Activated CD8-positive, alpha-beta T cell treated with anti-CD3 and anti-CD28 coated beads for 36 hours (primary cell): ENCODE measurements at regions of chr2 and their contacts with region 1.

Region 1: DNA sequence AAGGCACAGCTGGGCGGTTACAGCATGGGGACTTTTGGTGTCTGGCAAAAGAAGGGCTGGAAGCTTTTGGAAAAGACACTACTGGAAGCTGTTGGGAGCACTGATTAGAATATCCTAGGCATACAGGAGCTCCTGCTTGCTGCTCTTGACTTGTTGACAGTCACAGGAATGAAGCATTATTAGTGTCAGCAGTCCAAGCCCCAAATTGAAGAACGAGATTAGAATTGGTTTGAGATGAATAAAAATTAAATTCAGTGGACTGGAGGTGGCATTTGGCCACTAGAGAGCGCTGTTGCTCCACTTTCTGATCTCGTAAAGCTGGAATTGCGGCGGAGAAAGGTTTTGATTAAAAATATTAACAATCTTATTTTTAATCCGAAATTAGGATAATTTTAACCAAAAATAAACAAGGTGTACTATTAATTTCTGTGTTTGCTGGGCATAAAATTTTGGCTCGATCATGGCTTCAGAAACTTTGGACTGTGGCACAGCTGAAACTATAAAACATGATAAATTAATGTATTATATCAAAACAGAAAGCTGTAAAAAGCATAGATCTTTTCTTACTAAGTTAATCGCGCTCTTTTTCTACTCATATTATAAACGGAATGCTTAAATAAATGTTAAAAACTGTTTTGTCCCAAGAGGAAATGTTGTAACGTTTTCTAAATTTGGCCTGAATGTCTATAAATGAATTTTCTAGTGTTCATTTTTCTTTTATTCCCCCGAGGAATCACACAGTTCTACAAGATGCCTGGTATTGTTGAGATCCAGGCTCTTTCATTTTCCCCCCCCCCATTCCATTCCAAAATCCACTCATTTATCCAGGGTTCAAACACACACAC is 2.4 kb upstream of the HOXD8 start:
- DNase-seq: peak; percentile 81
- ATAC-seq: no peak
- H3K4me3 Mint-ChIP-seq: no peak overlapping the region
- H3K27ac Mint-ChIP-seq: no peak overlapping the region
- H3K4me1 Mint-ChIP-seq: peaks cover 26% of the 10 kb centered on the region
- H3K27me3 Mint-ChIP-seq: peaks cover 71% of the 10 kb centered on the region
- CTCF ChIP-seq: peak; percentile 90

Region 2: GRCh38 chr2:176104325-176105077 is 22.6 kb before region 1 on chr2:
- CTCF ChIA-PET with region 1: interaction called, 15 read pairs
- POLR2A ChIA-PET with region 1: no interaction called
- intact Hi-C with region 1: no loop called
- DNase-seq: peak; percentile 44
- ATAC-seq: no peak
- H3K4me3 Mint-ChIP-seq: no peak overlapping the region
- H3K27ac Mint-ChIP-seq: no peak overlapping the region
- H3K4me1 Mint-ChIP-seq: peaks cover 23% of the 10 kb centered on the region
- H3K27me3 Mint-ChIP-seq: peaks cover 82% of the 10 kb centered on the region
- CTCF ChIP-seq: no peak

Region 3: GRCh38 chr2:176140513-176141317 is 13.6 kb after region 1 on chr2:
- CTCF ChIA-PET with region 1: interaction called, 38 read pairs
- POLR2A ChIA-PET with region 1: no interaction called
- intact Hi-C with region 1: no loop called
- DNase-seq: peak; percentile 76
- ATAC-seq: peak; percentile 94
- H3K4me3 Mint-ChIP-seq: peak overlapping the region; percentile 56
- H3K27ac Mint-ChIP-seq: no peak overlapping the region
- H3K4me1 Mint-ChIP-seq: peaks cover 23% of the 10 kb centered on the region
- H3K27me3 Mint-ChIP-seq: peaks cover 68% of the 10 kb centered on the region
- CTCF ChIP-seq: peak; percentile 94

Region 4: GRCh38 chr2:176445956-176446355 is 318.8 kb after region 1 on chr2:
- CTCF ChIA-PET with region 1: interaction called, 15 read pairs
- POLR2A ChIA-PET with region 1: no interaction called
- intact Hi-C with region 1: no loop called
- DNase-seq: no peak
- ATAC-seq: no peak
- H3K4me3 Mint-ChIP-seq: no peak overlapping the region
- H3K27ac Mint-ChIP-seq: no peak overlapping the region
- H3K4me1 Mint-ChIP-seq: no peaks in the 10 kb centered on the region
- H3K27me3 Mint-ChIP-seq: peaks cover 2% of the 10 kb centered on the region
- CTCF ChIP-seq: no peak

Region 5: DNA sequence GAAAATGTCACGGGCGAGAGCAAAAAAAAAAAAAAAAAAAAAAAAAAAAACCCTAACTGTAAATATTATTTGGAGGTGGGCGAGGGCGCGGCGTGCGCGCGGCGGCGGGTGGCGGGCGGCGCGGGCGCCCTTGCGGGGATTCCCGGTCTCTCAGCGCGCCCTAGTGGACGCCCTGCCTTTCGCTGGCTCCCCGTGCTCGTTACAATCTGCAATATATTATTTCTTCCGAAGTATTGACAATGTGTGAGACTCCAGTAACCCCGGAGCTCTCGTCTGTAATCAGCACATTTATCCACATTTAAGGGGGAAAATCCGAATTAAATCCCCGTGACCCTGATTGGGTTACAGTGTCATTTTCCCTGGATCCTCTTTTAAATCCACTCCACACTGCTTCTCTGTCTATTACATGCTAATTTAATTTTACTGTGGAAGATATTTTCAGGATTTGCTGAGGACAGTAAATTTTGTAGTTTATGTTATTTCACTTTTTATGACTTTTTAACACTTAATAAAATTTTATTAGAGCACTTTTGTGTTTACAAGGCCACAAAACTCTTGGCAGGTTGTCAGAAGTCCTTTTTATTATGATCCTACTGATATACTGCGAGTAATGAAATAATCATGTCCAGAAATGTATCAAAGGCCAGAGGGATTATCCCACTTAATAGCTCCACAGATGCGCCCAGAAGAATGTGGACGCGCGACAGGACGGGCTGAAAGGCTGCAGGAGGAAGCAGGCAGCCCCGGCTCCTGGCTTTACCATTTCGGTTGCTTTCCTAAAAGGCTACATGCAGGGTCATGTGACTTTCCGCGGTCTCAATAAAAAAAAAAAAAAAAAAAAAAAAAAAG is 511.2 kb after region 1 on chr2:
- CTCF ChIA-PET with region 1: interaction called, 23 read pairs
- POLR2A ChIA-PET with region 1: interaction called, 3 read pairs
- intact Hi-C with region 1: loop called (anchors 5 kb)
- DNase-seq: peak; percentile 71
- ATAC-seq: peak; percentile 87
- H3K4me3 Mint-ChIP-seq: peak overlapping the region; percentile 60
- H3K27ac Mint-ChIP-seq: no peak overlapping the region
- H3K4me1 Mint-ChIP-seq: peaks cover 6% of the 10 kb centered on the region
- H3K27me3 Mint-ChIP-seq: peaks cover 52% of the 10 kb centered on the region
- CTCF ChIP-seq: peak; percentile 85

Region 6: GRCh38 chr2:177148477-177149154 is 1021.5 kb after region 1 on chr2:
- CTCF ChIA-PET with region 1: interaction called, 38 read pairs
- POLR2A ChIA-PET with region 1: interaction called, 3 read pairs
- intact Hi-C with region 1: loop called (anchors 5 kb)
- DNase-seq: peak; percentile 86
- ATAC-seq: peak; percentile 89
- H3K4me3 Mint-ChIP-seq: peak overlapping the region; percentile 81
- H3K27ac Mint-ChIP-seq: no peak overlapping the region
- H3K4me1 Mint-ChIP-seq: peaks cover 5% of the 10 kb centered on the region
- H3K27me3 Mint-ChIP-seq: peaks cover 31% of the 10 kb centered on the region
- CTCF ChIP-seq: peak; percentile 98